Spleen (tissue), 13 donors: ENCODE measurements at regions of chr22 and their contacts with region 1.

Region 1: DNA sequence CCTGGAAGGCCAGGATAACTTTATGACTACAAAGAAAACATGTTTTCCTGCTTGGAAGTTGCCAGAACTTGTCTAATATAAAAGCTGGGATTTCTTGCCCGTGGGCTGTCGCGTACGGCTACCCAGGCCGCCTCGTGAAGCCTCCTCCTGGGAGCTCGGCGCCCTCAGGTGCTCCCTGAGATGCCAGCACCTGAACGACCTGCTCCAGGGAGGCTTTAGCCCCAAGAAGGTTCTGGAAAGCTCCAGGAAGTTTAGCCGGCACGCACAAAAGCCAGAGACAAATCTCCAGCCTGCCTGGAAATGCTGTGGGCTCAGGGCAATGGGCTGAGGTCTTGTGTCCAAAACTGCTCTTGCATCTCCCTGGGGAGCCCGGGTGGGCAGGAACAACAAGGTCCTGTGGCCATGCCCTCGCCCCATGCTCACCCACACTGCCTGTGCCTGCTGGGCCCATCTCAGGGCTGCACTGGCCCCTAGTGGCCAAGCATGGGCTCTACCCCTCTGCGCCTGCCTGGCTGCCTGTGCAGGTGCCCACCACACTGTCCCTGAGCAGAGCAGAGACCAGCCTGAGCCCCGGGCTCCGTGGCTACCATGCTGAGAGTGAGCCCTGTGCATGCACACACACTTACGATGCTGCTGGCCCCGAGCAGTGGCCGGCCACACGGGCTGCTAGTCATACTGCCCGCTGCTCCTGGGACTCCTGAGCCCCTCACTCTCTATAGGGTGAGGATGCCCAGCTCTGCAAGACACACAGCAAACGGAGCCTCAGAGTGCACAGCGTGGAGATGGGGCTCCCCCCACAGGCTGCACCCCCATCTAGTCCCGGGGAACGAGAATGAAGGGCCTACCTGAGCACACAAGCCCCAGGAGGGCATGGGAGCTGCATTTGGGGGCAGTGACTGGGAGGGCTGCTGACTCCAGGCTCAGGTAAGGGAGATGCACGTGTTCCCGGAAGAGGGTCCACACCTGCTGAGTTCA is 4.9 kb upstream of the CELSR1 start:
- DNase-seq: peak; percentile 93
- H3K4me3 ChIP-seq: no peak overlapping the region
- H3K27ac ChIP-seq: no peak overlapping the region
- H3K4me1 ChIP-seq: peaks cover 5 to 33% (median 19%) of the 10 kb centered on the region in 6 donors
- H3K27me3 ChIP-seq: peaks cover 0 to 67% (median 28%) of the 10 kb centered on the region in 7 donors
- CTCF ChIP-seq: peak; percentile 84 to 97 (median 94)
- POLR2A ChIP-seq: no peak

Region 2: DNA sequence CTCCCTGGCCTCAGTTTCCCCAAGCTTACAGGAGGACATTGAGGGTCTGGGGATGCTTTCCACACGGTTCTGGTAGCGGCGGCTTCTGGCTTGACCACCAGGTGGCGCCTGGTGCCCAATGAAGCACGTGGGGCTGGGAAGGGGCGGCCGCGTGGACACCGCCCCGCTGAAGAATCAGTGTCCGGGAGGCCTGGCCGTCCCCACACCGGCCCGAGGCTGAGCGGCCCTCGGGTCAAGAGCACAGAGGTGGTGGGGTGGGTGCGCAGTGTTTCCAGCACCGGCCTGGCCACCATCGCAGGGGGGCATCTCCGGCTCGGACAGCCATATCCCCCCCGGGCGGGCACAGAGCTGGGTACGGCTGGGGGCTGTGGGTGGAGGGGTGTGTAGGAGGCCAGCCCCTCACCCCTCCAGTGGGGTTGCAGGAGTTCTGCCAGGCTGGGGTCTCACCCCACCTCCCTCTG is 419.8 kb before region 1 on chr22:
- intact Hi-C with region 1: loop called (anchors 10 kb)
- DNase-seq: peak; percentile 93
- H3K4me3 ChIP-seq: peak overlapping the region in 1 of 8 donors; percentile 34
- H3K27ac ChIP-seq: no peak overlapping the region
- H3K4me1 ChIP-seq: peaks cover 3 to 48% (median 16%) of the 10 kb centered on the region in 6 donors
- H3K27me3 ChIP-seq: peaks cover 0 to 4% (median 0%) of the 10 kb centered on the region in 7 donors
- CTCF ChIP-seq: peak; percentile 80 to 97 (median 93)
- POLR2A ChIP-seq: no peak

Region 3: DNA sequence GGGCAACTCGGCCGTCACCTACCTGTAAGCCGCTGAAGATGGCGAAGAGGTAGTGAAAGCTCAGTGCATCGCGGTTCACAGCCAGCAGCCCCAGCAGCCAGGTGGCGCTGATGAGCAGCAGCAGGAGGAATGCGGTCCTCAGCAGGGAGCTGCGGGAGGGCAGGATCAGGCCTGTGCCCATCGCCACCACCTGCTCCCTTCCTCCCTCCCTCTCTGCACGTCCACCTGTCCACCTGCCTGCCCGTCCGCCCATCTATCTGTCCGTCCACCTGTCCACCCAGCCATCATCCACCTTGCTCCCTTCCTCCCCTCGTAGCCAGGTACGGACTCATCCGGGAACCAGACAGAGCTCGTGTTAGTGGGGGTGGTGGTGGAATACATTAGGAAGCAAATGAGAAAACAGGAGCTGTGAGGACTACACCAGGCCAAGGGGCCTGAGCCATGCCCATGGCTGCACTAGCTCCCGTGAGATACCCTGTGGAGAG is 174.5 kb before region 1 on chr22:
- intact Hi-C with region 1: loop called (anchors 5 kb)
- DNase-seq: peak; percentile 92
- H3K4me3 ChIP-seq: peak overlapping the region in 2 of 8 donors; percentile 20 to 52
- H3K27ac ChIP-seq: peak overlapping the region in 1 of 8 donors; percentile 47
- H3K4me1 ChIP-seq: peaks cover 0 to 25% (median 8%) of the 10 kb centered on the region in 6 donors
- H3K27me3 ChIP-seq: peaks cover 0 to 44% (median 12%) of the 10 kb centered on the region in 7 donors
- CTCF ChIP-seq: peak; percentile 76 to 93 (median 83)
- POLR2A ChIP-seq: no peak